GM10248 (cell line): ENCODE measurements at regions of chr2 and their contacts with region 1.

Region 1: GRCh38 chr2:86079981-86080911 is 25.4 kb downstream of the POLR1A start:
- DNase-seq: peak; percentile 75
- CTCF ChIP-seq: peak; percentile 90

Region 2: GRCh38 chr2:85728883-85729824 is 351.1 kb before region 1 on chr2:
- CTCF ChIA-PET with region 1: interaction called, 21 read pairs
- POLR2A ChIA-PET with region 1: no interaction called
- DNase-seq: peak; percentile 89
- CTCF ChIP-seq: peak; percentile 96

Region 3: DNA sequence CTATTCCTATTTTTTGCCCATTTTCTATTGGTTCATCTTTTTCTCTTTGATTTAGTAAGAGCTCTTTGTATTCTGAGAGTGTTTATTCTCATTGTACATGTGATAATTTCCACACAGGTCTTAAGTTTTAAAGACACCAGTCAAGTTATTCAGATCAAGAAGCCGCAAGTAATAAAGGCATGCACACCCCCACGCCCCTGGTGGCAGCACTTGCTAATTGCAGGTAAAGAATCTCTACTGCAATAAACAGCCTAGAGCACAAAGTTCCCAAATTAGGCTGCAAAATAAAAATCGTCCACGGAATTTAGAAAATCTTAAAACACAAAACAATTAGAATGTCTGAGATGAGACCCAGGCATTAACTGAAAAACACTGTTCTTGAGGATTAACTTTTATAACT is 236.7 kb before region 1 on chr2:
- CTCF ChIA-PET with region 1: interaction called, 14 read pairs
- POLR2A ChIA-PET with region 1: no interaction called
- DNase-seq: no peak
- CTCF ChIP-seq: peak; percentile 16

Region 4: DNA sequence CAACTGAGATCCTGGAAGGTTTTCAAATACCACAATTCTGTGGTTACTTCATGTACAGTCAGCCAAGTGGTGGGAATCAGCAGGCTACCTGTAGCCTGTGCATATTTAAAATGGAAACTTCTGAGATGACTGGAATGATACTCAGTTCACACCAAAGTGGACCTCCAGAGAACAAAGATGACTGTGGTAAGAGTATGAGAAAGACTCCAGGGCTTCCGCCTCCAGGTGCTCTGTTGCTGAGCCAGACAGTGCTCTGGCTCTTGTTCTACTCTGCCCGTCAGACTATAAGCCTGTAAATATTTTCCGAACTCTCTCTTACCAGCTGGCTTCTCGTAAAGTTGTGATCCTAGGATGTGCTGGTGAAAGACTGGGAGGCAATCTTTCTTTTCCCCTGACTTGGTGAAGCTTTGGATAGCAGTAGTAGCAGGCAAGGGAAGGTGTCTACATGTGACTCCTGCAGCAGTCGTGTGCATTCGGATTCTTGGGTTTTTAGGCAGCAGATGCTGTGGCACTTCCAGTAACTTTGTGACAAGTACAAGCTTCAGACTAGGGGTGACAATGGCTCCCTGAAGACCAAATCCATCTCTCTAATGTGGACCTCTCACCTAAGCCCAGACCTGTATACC is 214.6 kb before region 1 on chr2:
- CTCF ChIA-PET with region 1: interaction called, 13 read pairs
- POLR2A ChIA-PET with region 1: interaction called, 3 read pairs
- DNase-seq: peak; percentile 56
- CTCF ChIP-seq: no peak

Region 5: GRCh38 chr2:86025229-86025820 is 54.9 kb before region 1 on chr2:
- CTCF ChIA-PET with region 1: interaction called, 12 read pairs
- POLR2A ChIA-PET with region 1: no interaction called
- DNase-seq: no peak
- CTCF ChIP-seq: no peak

Region 6: GRCh38 chr2:86042256-86043168 is 37.7 kb before region 1 on chr2:
- CTCF ChIA-PET with region 1: interaction called, 33 read pairs
- POLR2A ChIA-PET with region 1: no interaction called
- DNase-seq: no peak
- CTCF ChIP-seq: no peak